H1 (cell line): ENCODE measurements at regions of chr10 and their contacts with region 1.

Region 1: GRCh38 chr10:113982769-113983168 is 60.9 kb upstream of the ADRB1 start:
- DNase-seq: no peak
- H3K4me3 ChIP-seq: no peak overlapping the region
- H3K27ac ChIP-seq: no peak overlapping the region
- H3K4me1 ChIP-seq: peaks cover 0 to 7% (median 3%) of the 10 kb centered on the region in 4 experiments; a peak in 3 of 7 replicates
- H3K27me3 ChIP-seq: no peaks in the 10 kb centered on the region; a peak in 1 of 7 replicates
- CTCF ChIP-seq: no peak
- EP300 ChIP-seq: no peak
- POLR2A ChIP-seq: no peak
- RAD21 ChIP-seq: no peak

Region 2: DNA sequence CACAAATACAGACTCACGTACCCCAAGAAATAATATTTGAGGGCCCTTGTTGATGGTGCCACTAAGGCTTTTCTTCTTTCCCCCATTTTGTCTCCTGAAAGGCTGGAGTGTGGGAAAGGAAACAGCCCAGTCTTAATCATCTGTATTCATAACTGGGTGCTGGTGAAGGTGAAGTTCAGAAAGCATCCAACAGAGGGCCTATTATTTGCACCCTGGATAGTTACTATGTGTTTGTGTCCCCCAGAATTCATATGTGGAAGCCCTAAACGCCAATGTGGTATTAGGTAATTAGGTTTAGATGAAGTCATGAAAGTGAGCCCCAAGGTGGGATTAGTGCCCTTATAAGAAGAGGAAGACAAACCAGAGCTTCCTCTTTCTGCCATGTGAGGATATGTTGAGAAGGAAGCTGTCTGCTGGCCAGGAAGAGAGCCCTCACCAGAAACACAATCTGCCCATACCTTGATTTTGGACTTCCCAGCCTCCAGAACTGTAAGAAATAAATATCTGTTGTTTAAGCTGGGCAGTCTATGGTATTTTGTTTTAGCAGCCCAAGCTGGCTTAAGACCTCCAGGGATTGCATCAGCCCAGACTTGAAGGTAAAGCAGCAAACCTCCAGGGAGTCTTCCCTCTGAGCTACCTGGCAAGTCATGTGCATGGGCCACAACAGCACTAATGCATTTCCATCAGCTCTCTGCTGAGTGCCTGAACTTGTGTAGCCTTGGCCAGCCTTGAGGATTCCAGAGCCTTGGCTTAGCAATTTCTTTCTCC is 29.1 kb before region 1 on chr10:
- CTCF ChIA-PET with region 1: interaction called, 11 read pairs
- POLR2A ChIA-PET with region 1: no interaction called
- DNase-seq: no peak
- H3K4me3 ChIP-seq: no peak overlapping the region
- H3K27ac ChIP-seq: no peak overlapping the region
- H3K4me1 ChIP-seq: no peaks in the 10 kb centered on the region
- H3K27me3 ChIP-seq: no peaks in the 10 kb centered on the region
- CTCF ChIP-seq: peak in 1 of 3 experiments; percentile 40; a peak in 1 of 4 replicates
- EP300 ChIP-seq: no peak
- POLR2A ChIP-seq: no peak
- RAD21 ChIP-seq: peak; percentile 22 to 34; a peak in 2 of 4 replicates

Region 3: DNA sequence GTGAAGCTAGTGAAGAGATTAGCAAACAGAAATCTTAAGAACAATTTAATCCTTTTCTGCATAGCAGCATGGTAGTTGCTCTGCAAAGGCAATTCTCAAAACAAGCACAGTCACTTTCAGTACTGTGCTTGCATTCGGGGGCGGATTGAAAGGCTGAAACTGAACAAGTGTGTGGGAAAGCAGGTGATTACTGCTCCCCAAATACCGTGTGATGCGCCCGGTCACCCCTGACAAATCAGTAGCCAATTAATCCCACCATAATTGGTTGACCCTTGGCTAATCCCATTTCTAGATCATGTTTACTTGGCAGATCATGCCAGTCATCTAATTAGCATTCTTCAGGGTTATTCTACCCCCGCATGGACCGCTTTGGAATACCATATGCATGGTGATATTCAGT is 15.6 kb before region 1 on chr10:
- CTCF ChIA-PET with region 1: interaction called, 19 read pairs
- POLR2A ChIA-PET with region 1: no interaction called
- DNase-seq: no peak
- H3K4me3 ChIP-seq: no peak overlapping the region
- H3K27ac ChIP-seq: no peak overlapping the region
- H3K4me1 ChIP-seq: no peaks in the 10 kb centered on the region
- H3K27me3 ChIP-seq: no peaks in the 10 kb centered on the region
- CTCF ChIP-seq: no peak
- EP300 ChIP-seq: no peak
- POLR2A ChIP-seq: no peak
- RAD21 ChIP-seq: no peak

Region 4: GRCh38 chr10:113993489-113993991 is 10.8 kb after region 1 on chr10:
- CTCF ChIA-PET with region 1: interaction called, 11 read pairs
- POLR2A ChIA-PET with region 1: interaction called, 3 read pairs
- DNase-seq: no peak
- H3K4me3 ChIP-seq: no peak overlapping the region
- H3K27ac ChIP-seq: no peak overlapping the region
- H3K4me1 ChIP-seq: no peaks in the 10 kb centered on the region
- H3K27me3 ChIP-seq: no peaks in the 10 kb centered on the region
- CTCF ChIP-seq: no peak
- EP300 ChIP-seq: no peak
- POLR2A ChIP-seq: no peak
- RAD21 ChIP-seq: no peak

Region 5: DNA sequence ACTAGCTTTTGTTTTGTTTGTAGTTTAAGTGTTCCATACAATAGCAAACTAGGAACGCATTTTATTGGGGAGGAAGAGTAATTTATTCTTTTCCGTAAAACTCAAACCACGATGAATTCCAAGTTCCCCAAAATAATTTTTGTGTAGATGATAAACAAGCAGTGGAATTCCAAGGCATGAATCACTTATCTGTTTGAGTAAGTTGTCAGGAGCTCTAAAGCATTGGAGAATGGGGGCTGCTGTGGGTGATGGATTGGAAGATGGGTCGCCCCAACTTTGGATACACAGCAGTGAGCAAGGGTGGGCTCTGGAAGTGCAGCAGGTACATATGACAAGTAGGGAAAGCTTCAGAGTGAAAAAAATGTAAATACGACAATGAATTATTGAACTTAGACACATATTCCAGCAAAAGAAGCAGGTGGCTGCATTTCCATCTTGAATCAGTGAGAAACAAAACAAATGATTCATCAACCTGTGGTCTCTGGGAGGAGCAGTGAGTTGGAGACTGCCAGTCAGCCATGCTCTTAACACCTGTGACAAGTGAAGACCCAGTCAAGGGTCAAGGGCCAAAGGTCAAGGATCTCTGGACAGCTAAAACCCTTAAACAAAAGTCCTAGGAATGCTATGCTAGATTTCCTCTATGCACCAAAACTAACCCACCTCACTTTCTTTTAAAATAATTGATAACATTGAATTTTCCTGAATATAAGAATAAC is 26.7 kb after region 1 on chr10:
- CTCF ChIA-PET with region 1: no interaction called
- POLR2A ChIA-PET with region 1: no interaction called
- DNase-seq: no peak
- H3K4me3 ChIP-seq: no peak overlapping the region
- H3K27ac ChIP-seq: no peak overlapping the region
- H3K4me1 ChIP-seq: no peaks in the 10 kb centered on the region
- H3K27me3 ChIP-seq: no peaks in the 10 kb centered on the region
- CTCF ChIP-seq: no peak
- EP300 ChIP-seq: no peak
- POLR2A ChIP-seq: no peak
- RAD21 ChIP-seq: no peak